Activated T-helper 2 cell treated with anti-CD3 and anti-CD28 coated beads, Interferon-gamma antibody, Interleukin-2, Interleukin-4, amounts not matched to agents 10 μg/mL and 5 μg/mL and 100 μg/mL, durations not matched to agents 14 hours and 24 hours and 36 hours (primary cell): ENCODE measurements at regions of chr21 and their contacts with region 1.

Region 1: GRCh38 chr21:37407719-37408420 is 41.3 kb downstream of the DYRK1A start:
- DNase-seq: no peak
- H3K4me3 Mint-ChIP-seq: no peak overlapping the region
- H3K27ac Mint-ChIP-seq: peak overlapping the region; percentile 75
- H3K4me1 Mint-ChIP-seq: peaks cover 63% of the 10 kb centered on the region
- H3K27me3 Mint-ChIP-seq: no peaks in the 10 kb centered on the region

Region 2: GRCh38 chr21:37463083-37463801 is 55.4 kb after region 1 on chr21:
- intact Hi-C with region 1: loop called (anchors 5 kb)
- DNase-seq: no peak
- H3K4me3 Mint-ChIP-seq: no peak overlapping the region
- H3K27ac Mint-ChIP-seq: peak overlapping the region; percentile 48
- H3K4me1 Mint-ChIP-seq: peaks cover 54% of the 10 kb centered on the region
- H3K27me3 Mint-ChIP-seq: no peaks in the 10 kb centered on the region